ENCODE measurements at regions of chr13 and their contacts with region 1.

Region 1: GRCh38 chr13:110915057-110915873 is at the start of gene ANKRD10:
- DNase-seq: peak; percentile 99 to 100 (median 99)
- ATAC-seq: peak; percentile 91 to 95 (median 92)
- H3K4me3 ChIP-seq: peak within 1 kb of the TSS; percentile 71 to 99 (median 96)
- H3K27ac ChIP-seq: peak within 1 kb of the TSS; percentile 93 to 100 (median 100)
- H3K4me1 ChIP-seq: peaks cover 8 to 53% (median 36%) of the 10 kb centered on the region in 12 donors
- H3K27me3 ChIP-seq: no peaks in the 10 kb centered on the region
- CTCF ChIP-seq: peak; percentile 75 to 100 (median 96)
- POLR2A ChIP-seq: peak in 1 of 2 donors; percentile 68
- total RNA-seq, gene ANKRD10: 37.9 to 81.3 (median 49.7) TPM

Region 2: GRCh38 chr13:110705826-110706569 is 209.3 kb before region 1 on chr13 and contains the start of gene CARS2:
- intact Hi-C with region 1: loop called in 7 of 10 experiments (anchors 5 to 10 kb)
- DNase-seq: peak; percentile 94 to 98 (median 96)
- ATAC-seq: peak; percentile 96 to 99 (median 98)
- H3K4me3 ChIP-seq: peak within 1 kb of the TSS; percentile 34 to 92 (median 78)
- H3K27ac ChIP-seq: peak within 1 kb of the TSS; percentile 59 to 100 (median 82)
- H3K4me1 ChIP-seq: peaks cover 4 to 35% (median 16%) of the 10 kb centered on the region in 12 donors
- H3K27me3 ChIP-seq: no peaks in the 10 kb centered on the region
- CTCF ChIP-seq: peak in 7 of 12 donors; percentile 12 to 36 (median 23)
- POLR2A ChIP-seq: peak in 1 of 2 donors; percentile 59
- total RNA-seq, gene CARS2: 35.4 to 48.4 (median 43.5) TPM

Region 3: GRCh38 chr13:110874508-110874960 is 40.7 kb before region 1 on chr13:
- intact Hi-C with region 1: loop called in 9 of 10 experiments (anchors 2 to 5 kb)
- DNase-seq: peak; percentile 89 to 92 (median 91)
- ATAC-seq: peak; percentile 64 to 85 (median 76)
- H3K4me3 ChIP-seq: peak overlapping the region in 11 of 12 donors; percentile 21 to 55 (median 44)
- H3K27ac ChIP-seq: peak overlapping the region in 2 of 12 donors; percentile 47
- H3K4me1 ChIP-seq: peaks cover 7 to 37% (median 23%) of the 10 kb centered on the region in 12 donors
- H3K27me3 ChIP-seq: no peaks in the 10 kb centered on the region
- CTCF ChIP-seq: no peak
- POLR2A ChIP-seq: no peak

Region 4: GRCh38 chr13:111011899-111012298 is 96.6 kb after region 1 on chr13:
- intact Hi-C with region 1: loop called in 4 of 10 experiments (anchors 2 to 10 kb)
- DNase-seq: peak in 1 of 5 donors; percentile 49
- ATAC-seq: peak in 3 of 4 donors; percentile 56 to 70 (median 65)
- H3K4me3 ChIP-seq: no peak overlapping the region
- H3K27ac ChIP-seq: no peak overlapping the region
- H3K4me1 ChIP-seq: peaks cover 0 to 21% (median 7%) of the 10 kb centered on the region in 12 donors
- H3K27me3 ChIP-seq: no peaks in the 10 kb centered on the region
- CTCF ChIP-seq: no peak
- POLR2A ChIP-seq: no peak

Region 5: GRCh38 chr13:111177081-111177711 is 261.9 kb after region 1 on chr13:
- intact Hi-C with region 1: loop called in 1 of 10 experiments (anchors 10 kb)
- DNase-seq: peak; percentile 77 to 87 (median 82)
- ATAC-seq: peak; percentile 68 to 91 (median 89)
- H3K4me3 ChIP-seq: no peak overlapping the region
- H3K27ac ChIP-seq: peak overlapping the region; percentile 74 to 94 (median 84)
- H3K4me1 ChIP-seq: peaks cover 18 to 61% (median 46%) of the 10 kb centered on the region in 12 donors
- H3K27me3 ChIP-seq: no peaks in the 10 kb centered on the region
- CTCF ChIP-seq: no peak
- POLR2A ChIP-seq: no peak

Region 6: GRCh38 chr13:111202745-111203144 is 287.5 kb after region 1 on chr13:
- intact Hi-C with region 1: no loop called
- DNase-seq: peak in 3 of 5 donors; percentile 45 to 73 (median 62)
- ATAC-seq: peak; percentile 66 to 90 (median 80)
- H3K4me3 ChIP-seq: peak overlapping the region in 11 of 12 donors; percentile 22 to 65 (median 51)
- H3K27ac ChIP-seq: peak overlapping the region; percentile 56 to 89 (median 79)
- H3K4me1 ChIP-seq: peaks cover 13 to 77% (median 52%) of the 10 kb centered on the region in 12 donors
- H3K27me3 ChIP-seq: no peaks in the 10 kb centered on the region
- CTCF ChIP-seq: no peak
- POLR2A ChIP-seq: peak in 1 of 2 donors; percentile 24